SK-N-SH (cell line): ENCODE measurements at regions of chr11 and their contacts with region 1.

Region 1: GRCh38 chr11:76207642-76208401 is 1.5 kb upstream of the WNT11 start:
- DNase-seq: peak; percentile 94
- H3K4me3 ChIP-seq: peak overlapping the region; percentile 57 to 68
- H3K27ac ChIP-seq: no peak overlapping the region
- H3K4me1 ChIP-seq: peaks cover 0 to 37% of the 10 kb centered on the region in 2 experiments; a peak in 1 of 4 replicates
- H3K27me3 ChIP-seq: peaks cover 10% of the 10 kb centered on the region
- CTCF ChIP-seq: peak; percentile 88
- EP300 ChIP-seq: no peak
- RAD21 ChIP-seq: peak; percentile 76

Region 2: DNA sequence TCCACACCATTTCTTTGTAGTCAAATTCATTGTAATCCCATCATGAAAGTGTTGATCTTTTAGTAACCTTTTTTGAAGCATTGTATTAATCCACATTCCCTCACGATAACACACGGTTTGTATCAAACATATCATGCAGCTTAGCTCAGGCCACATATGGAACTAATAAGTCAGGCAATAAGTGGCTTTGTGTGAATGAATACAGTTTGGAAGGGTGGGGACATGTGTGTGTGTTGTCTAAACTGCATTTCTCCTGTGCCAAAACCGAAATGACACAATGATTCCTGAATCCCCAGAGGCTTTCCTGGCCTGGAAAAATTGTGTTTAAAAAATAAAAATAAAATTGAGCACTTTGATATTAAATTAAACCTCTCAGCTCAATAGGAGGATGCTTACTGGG is 99.9 kb before region 1 on chr11:
- CTCF ChIA-PET with region 1: interaction called, 18 read pairs
- POLR2A ChIA-PET with region 1: interaction called, 3 read pairs
- DNase-seq: peak; percentile 38
- H3K4me3 ChIP-seq: no peak overlapping the region
- H3K27ac ChIP-seq: peak overlapping the region in 1 of 2 experiments; percentile 78; a peak in 2 of 4 replicates
- H3K4me1 ChIP-seq: peaks cover 0 to 4% of the 10 kb centered on the region in 2 experiments; a peak in 2 of 4 replicates
- H3K27me3 ChIP-seq: no peaks in the 10 kb centered on the region
- CTCF ChIP-seq: no peak
- EP300 ChIP-seq: peak in 1 of 2 experiments; percentile 21; a peak in 1 of 4 replicates
- RAD21 ChIP-seq: no peak

Region 3: GRCh38 chr11:76185931-76186401 is 21.9 kb before region 1 on chr11:
- CTCF ChIA-PET with region 1: interaction called, 94 read pairs
- POLR2A ChIA-PET with region 1: interaction called, 3 read pairs
- DNase-seq: peak; percentile 76
- H3K4me3 ChIP-seq: no peak overlapping the region
- H3K27ac ChIP-seq: peak overlapping the region in 1 of 2 experiments; percentile 14; a peak in 1 of 4 replicates
- H3K4me1 ChIP-seq: peaks cover 0 to 33% of the 10 kb centered on the region in 2 experiments; a peak in 1 of 4 replicates
- H3K27me3 ChIP-seq: no peaks in the 10 kb centered on the region
- CTCF ChIP-seq: no peak
- EP300 ChIP-seq: no peak
- RAD21 ChIP-seq: no peak

Region 4: GRCh38 chr11:76248210-76248609 is 40.4 kb after region 1 on chr11:
- CTCF ChIA-PET with region 1: interaction called, 30 read pairs
- POLR2A ChIA-PET with region 1: no interaction called
- DNase-seq: no peak
- H3K4me3 ChIP-seq: no peak overlapping the region
- H3K27ac ChIP-seq: no peak overlapping the region
- H3K4me1 ChIP-seq: peaks cover 0 to 3% of the 10 kb centered on the region in 2 experiments; a peak in 1 of 4 replicates
- H3K27me3 ChIP-seq: peaks cover 12% of the 10 kb centered on the region; the same call in 1 of the 2 replicates
- CTCF ChIP-seq: peak; percentile 34; the same call in 1 of the 2 replicates
- EP300 ChIP-seq: no peak
- RAD21 ChIP-seq: 0 out of 2 replicates have a peak, but pooled peaks have one; percentile 4

Region 5: DNA sequence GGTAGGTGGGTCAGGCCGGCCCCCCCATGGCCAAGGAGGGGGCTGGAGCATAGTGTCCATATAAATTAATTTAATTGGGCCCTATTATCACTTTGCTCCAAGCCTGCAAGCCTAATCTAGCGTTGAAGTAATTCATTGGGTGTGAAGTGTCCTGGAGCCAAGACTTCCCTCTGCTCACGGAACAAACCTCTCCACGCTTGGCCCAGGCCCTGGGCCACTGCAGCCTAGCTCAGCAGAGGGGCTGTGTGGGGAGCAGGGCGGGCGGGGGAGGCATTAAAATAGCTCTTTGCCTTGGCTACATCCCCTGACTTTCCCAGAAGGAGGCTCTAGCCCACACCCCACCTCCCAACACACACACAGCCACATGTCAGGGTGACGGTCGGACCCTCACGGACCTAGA is 99.6 kb after region 1 on chr11:
- CTCF ChIA-PET with region 1: interaction called, 328 read pairs
- POLR2A ChIA-PET with region 1: no interaction called
- DNase-seq: no peak
- H3K4me3 ChIP-seq: no peak overlapping the region
- H3K27ac ChIP-seq: no peak overlapping the region; a peak in 1 of 4 replicates
- H3K4me1 ChIP-seq: peaks cover 0 to 17% of the 10 kb centered on the region in 2 experiments; a peak in 1 of 4 replicates
- H3K27me3 ChIP-seq: peaks cover 6% of the 10 kb centered on the region; the same call in 1 of the 2 replicates
- CTCF ChIP-seq: no peak
- EP300 ChIP-seq: no peak
- RAD21 ChIP-seq: no peak